CD4-positive, alpha-beta T cell (primary cell): ENCODE measurements at regions of chr12 and their contacts with region 1.

Region 1: DNA sequence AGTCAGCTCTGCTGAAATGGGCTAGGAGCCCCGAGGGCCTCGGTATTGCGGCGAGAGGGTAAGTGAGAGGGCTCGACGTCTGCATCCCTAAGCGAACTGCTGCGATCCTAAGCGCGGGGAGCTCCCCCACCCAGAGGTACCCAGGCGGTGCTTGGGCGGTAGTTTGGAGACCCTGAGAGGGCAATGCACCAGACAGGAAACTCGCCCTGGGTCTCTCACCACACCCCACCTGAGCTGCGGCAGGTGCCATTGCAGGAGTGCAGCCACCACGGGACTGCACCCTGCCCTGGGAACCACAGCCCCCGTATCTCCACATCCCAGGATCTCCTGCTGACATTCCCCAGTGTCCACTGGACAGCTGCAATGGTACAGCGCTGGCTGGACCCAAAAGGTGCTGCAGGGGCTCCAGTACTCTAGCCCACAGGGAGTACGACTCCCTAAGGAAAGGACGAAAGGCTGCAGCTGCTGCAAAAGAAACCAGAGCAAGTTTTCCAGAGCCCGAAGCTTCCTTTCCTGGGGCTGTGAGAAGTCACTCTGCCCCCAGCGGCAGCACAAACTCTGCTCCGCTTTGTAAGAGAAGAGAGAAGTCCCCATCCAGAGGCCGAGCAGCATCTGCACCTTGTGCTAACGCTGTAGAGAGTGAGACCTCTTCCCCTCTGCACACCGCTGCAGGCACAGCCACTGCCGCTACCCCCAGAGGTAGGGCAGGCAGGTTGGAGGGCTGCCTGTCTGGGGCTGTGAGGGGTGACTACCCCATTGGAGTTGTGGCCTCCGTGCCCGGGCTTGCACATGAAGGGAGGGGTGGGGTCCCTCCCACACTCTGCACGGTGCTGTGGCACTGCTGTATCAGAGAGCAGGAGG is 31.1 kb upstream of the MON2 start:
- DNase-seq: peak in 13 of 14 experiments; percentile 2 to 57 (median 19)
- ATAC-seq: peak; percentile 79
- H3K4me3 ChIP-seq: peak overlapping the region; percentile 52
- H3K4me3 Mint-ChIP-seq: peak overlapping the region; percentile 86
- H3K27ac ChIP-seq: no peak overlapping the region
- H3K27ac Mint-ChIP-seq: no peak overlapping the region
- H3K4me1 ChIP-seq: peaks cover 19% of the 10 kb centered on the region
- H3K4me1 Mint-ChIP-seq: peaks cover 15% of the 10 kb centered on the region
- H3K27me3 ChIP-seq: peaks cover 0 to 18% of the 10 kb centered on the region in 2 experiments
- H3K27me3 Mint-ChIP-seq: peaks cover 41% of the 10 kb centered on the region
- CTCF ChIP-seq: peak; percentile 19

Region 2: DNA sequence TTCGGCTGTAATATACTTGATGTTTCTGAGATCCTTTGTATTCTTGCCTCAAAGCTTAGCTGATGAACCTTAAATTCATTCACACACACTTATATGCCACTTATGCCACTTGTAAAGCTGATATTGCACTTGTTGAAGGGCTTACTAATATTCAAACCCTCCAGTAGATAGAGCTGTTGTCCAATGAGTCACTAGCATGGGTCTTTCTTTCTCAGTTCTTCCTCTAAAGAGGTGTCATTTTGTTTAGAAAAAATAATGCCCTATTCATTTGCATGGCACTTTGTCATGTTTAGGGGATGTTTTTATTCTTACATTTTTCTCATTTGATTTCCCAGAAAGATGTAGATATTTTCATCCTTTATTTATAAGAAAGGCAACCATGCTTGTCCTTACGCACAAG is 87.5 kb after region 1 on chr12:
- CTCF ChIA-PET with region 1: interaction called, 3 read pairs
- POLR2A ChIA-PET with region 1: no interaction called
- intact Hi-C with region 1: loop called in 1 of 2 experiments (anchors 2 kb)
- DNase-seq: peak in 1 of 14 experiments; percentile 15
- ATAC-seq: peak; percentile 44
- H3K4me3 ChIP-seq: no peak overlapping the region
- H3K4me3 Mint-ChIP-seq: no peak overlapping the region
- H3K27ac ChIP-seq: no peak overlapping the region
- H3K27ac Mint-ChIP-seq: no peak overlapping the region
- H3K4me1 ChIP-seq: no peaks in the 10 kb centered on the region
- H3K4me1 Mint-ChIP-seq: peaks cover 57% of the 10 kb centered on the region
- H3K27me3 ChIP-seq: no peaks in the 10 kb centered on the region
- H3K27me3 Mint-ChIP-seq: no peaks in the 10 kb centered on the region
- CTCF ChIP-seq: no peak

Region 3: DNA sequence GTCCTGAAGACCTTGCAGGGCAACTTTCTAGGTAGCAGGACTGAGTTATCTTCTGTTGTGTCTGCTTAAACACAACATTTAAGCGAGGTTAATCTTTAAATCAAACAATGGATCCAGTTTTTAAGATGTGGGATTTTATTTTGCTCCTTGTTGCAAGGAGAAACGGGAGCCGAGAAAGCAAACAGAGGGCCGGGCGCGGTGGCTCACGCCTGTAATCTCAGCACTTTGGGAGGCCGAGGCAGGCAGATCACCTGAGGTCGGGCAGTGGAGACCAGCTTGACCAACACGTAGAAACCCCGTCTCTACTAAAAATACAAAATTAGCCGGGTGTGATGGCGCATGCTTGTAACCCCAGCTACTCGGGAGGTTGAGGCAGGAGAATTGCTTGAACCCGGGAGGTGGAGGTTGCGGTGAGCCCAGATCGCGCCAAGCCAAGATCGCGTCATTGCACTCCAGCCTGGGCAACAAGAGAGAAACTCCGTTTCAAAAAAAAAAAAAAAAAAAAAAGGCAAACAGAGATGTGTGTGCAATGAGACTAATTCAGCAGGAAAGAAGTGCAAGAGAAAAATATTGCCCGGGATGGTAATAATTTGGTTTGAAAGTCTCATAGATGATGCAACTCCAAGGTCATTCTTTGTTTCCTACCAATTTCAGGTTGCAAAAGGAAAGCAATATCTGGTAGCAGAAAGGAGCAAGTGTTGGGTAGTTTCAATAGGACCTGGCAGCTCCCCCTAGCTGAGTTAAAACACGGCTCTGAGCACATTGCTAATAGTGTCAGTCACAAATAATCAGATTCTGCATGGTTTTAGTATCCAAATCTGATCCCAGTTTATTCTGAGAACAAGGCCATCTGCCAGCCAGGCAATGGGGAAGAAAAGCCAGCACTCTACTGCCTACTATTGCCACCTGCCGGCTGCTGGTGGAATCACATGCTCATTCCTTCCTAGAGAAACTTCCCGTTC is 358.0 kb after region 1 on chr12:
- CTCF ChIA-PET with region 1: interaction called, 6 read pairs
- POLR2A ChIA-PET with region 1: no interaction called
- intact Hi-C with region 1: loop called (anchors 1 to 2 kb)
- DNase-seq: peak; percentile 53 to 82 (median 68)
- ATAC-seq: peak; percentile 73
- H3K4me3 ChIP-seq: no peak overlapping the region
- H3K4me3 Mint-ChIP-seq: no peak overlapping the region
- H3K27ac ChIP-seq: no peak overlapping the region
- H3K27ac Mint-ChIP-seq: no peak overlapping the region
- H3K4me1 ChIP-seq: no peaks in the 10 kb centered on the region
- H3K4me1 Mint-ChIP-seq: no peaks in the 10 kb centered on the region
- H3K27me3 ChIP-seq: peaks cover 0 to 2% of the 10 kb centered on the region in 2 experiments
- H3K27me3 Mint-ChIP-seq: peaks cover 4% of the 10 kb centered on the region
- CTCF ChIP-seq: peak; percentile 98

Region 4: DNA sequence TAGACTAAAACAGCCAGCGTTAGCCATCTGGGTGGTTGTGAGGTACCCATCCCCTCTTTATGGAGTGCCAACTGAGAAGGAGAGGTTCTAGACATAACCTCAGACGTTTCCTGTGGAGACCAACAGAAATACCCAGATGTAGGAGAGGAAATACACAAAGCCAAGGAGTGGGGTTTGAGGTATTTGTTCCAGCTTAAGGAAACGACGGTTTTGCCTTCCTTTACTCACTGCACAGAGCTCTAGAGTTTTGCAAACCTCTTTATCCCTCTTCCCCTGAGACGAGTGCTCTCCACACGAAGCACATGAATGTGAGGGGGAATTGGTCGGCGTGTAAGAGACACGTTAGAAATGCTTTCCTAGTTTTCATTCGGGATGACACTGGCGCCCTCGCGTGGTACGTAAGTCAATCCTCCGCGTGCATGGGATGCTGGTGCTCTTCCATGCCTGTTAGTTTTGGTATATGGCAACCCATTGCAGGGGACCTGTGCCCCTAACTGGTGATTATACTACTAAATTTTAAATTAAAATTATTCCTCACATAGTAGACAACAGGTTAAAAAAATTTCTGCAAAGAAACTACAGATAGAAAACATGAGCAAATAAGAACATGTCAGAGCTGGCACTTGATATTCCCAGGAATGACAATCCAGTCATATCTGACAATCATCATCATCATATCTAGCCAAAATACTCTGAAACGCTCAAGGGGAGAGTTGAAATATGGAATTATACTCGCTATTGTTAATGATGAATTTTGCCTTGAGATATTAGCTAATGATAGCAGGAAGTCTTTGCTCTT is 377.7 kb after region 1 on chr12:
- CTCF ChIA-PET with region 1: interaction called, 3 read pairs
- POLR2A ChIA-PET with region 1: no interaction called
- intact Hi-C with region 1: loop called in 1 of 2 experiments (anchors 5 kb)
- DNase-seq: peak in 10 of 14 experiments; percentile 4 to 63 (median 15)
- ATAC-seq: peak; percentile 37
- H3K4me3 ChIP-seq: no peak overlapping the region
- H3K4me3 Mint-ChIP-seq: peak overlapping the region; percentile 47
- H3K27ac ChIP-seq: no peak overlapping the region
- H3K27ac Mint-ChIP-seq: no peak overlapping the region
- H3K4me1 ChIP-seq: peaks cover 6% of the 10 kb centered on the region
- H3K4me1 Mint-ChIP-seq: peaks cover 19% of the 10 kb centered on the region
- H3K27me3 ChIP-seq: peaks cover 5 to 11% of the 10 kb centered on the region in 2 experiments
- H3K27me3 Mint-ChIP-seq: peaks cover 18% of the 10 kb centered on the region
- CTCF ChIP-seq: peak; percentile 67